ENCODE measurements at regions of chr22 and their contacts with region 1.

Region 1: DNA sequence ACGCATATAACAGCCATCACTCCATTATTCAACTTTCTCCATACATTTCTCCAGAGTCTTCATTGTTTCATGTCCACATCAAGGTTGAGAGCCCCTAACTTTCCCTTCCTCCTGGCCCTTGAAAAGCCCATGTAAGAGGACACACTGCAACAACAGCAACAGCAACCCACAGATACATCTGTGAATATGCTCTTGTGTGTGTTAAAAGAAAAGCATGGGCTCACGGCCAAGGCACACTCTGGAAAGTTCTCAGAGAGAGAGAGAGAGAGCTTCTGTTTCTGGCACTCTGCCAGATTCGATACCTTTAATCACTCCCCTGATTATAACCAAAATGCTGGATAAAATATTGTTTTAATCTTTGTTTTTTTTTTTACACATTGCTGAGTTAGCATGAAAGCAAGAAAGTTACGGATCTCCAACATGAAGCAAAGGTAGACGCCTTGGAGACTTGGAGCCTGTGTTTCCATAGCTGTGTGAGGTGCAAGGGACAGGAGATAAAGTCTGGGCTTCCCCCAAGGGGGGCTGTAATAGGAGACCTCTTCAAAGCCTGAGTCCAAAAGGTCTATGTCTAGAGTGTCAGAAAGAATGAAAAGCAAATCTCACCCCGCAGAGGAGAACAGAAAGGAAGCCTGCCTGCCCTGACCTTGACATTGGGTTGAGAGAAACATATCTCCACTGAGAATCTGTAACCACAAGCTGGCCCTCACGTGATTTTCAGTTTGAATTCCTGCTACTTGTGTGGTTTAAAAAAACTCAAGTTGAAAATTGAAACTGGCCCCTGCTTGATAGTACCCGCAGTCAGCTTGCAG is 33.7 kb upstream of the MPPED1 start:
- DNase-seq: peak; percentile 44
- H3K4me3 Mint-ChIP-seq: no peak overlapping the region
- H3K27ac Mint-ChIP-seq: no peak overlapping the region
- H3K4me1 Mint-ChIP-seq: peaks cover 39% of the 10 kb centered on the region
- H3K27me3 Mint-ChIP-seq: peaks cover 68% of the 10 kb centered on the region

Region 2: GRCh38 chr22:43230971-43231723 is 147.0 kb before region 1 on chr22:
- CTCF ChIA-PET with region 1: interaction called, 16 read pairs
- POLR2A ChIA-PET with region 1: no interaction called
- DNase-seq: peak; percentile 73
- H3K4me3 Mint-ChIP-seq: no peak overlapping the region
- H3K27ac Mint-ChIP-seq: no peak overlapping the region
- H3K4me1 Mint-ChIP-seq: peaks cover 4% of the 10 kb centered on the region
- H3K27me3 Mint-ChIP-seq: peaks cover 3% of the 10 kb centered on the region